ENCODE measurements at regions of chr16 and their contacts with region 1.

Region 1: GRCh38 chr16:69286941-69287713 is 24.0 kb upstream of the VPS4A start:
- DNase-seq: peak; percentile 55
- H3K4me3 ChIP-seq: no peak overlapping the region
- H3K27ac ChIP-seq: no peak overlapping the region
- H3K4me1 ChIP-seq: peaks cover 7% of the 10 kb centered on the region
- H3K27me3 ChIP-seq: no peaks in the 10 kb centered on the region
- CTCF ChIP-seq: peak; percentile 30 to 70 (median 45)
- POLR2A ChIP-seq: no peak

Region 2: DNA sequence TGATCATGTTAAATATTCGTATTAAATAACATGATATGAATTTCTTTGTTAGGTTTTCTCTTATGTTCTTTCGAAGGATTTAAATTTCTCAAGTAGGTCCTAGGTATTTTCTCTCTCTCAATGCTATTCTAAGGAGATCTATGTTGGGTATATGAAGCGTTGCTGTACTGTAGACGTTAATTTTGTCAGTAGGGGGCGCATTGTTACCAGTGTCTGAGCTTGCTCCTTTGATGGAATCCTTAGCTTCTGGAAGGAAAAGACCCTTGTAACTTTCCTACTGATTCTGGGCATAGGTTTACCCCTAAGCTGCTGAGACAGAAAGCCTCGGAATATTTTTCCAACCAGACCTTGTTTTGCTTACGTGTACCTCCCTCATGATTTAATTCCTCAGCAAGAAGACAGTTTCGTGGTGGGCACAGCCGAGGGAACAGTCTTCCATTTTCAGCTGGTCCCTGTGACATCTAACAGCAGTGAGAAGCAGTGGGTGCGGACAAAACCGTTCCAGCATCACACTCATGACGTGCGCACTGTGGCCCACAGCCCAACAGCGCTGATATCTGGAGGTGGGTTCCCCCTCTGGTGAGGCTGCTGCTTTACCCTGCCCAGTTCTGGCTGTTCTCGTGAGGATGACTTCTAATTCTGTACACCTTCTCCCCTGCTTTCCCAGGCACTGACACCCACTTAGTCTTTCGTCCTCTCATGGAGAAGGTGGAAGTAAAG is 136.8 kb before region 1 on chr16:
- intact Hi-C with region 1: loop called (anchors 5 kb)
- DNase-seq: peak; percentile 80
- H3K4me3 ChIP-seq: no peak overlapping the region
- H3K27ac ChIP-seq: no peak overlapping the region
- H3K4me1 ChIP-seq: peaks cover 10% of the 10 kb centered on the region
- H3K27me3 ChIP-seq: no peaks in the 10 kb centered on the region
- CTCF ChIP-seq: peak; percentile 32 to 73 (median 67)
- POLR2A ChIP-seq: no peak

Region 3: DNA sequence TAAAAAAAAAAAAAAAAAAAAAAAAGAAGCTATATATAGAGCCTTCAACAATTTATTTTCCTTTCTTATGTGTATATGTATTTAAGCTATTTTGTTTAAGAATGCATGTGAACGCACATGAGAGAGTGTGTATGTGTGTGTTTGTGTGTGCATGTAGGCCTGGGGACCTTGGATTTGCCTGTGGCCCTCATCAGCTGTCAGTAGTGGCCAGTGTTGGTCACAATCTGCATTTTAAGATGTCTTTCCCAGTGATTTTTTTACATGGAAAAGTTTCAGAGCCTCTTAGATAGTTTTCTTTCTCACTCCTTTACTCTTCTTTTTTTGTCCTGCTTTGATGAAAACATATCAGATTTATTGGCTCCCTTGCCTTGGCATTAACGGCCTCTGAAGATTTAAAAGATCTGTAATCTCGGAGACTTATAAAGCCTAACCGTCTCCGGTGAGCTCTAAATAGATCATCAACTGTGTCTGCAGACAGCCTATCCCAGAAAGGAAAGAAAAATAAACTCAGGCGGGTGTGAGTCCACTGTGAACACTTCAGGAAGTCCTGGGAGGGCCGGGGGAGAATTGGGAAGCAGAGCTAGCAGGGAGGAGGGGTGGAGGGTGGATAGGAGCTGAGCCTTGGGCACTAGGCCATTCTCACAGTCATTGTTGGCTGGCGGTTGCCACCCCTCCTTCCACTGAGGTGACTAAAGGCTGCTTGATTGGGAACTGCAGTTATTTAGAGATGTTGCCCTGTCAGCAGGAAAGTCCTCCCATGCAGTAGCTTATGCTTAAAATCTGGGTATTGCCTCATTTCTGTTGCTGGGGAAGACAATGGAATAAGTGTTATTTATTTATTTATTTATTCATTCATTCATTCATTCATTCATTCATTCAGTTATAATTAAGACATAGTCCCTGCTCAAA is 561.8 kb after region 1 on chr16:
- intact Hi-C with region 1: no loop called
- DNase-seq: peak; percentile 79
- H3K4me3 ChIP-seq: no peak overlapping the region
- H3K27ac ChIP-seq: peak overlapping the region; percentile 50 to 86
- H3K4me1 ChIP-seq: peaks cover 18% of the 10 kb centered on the region
- H3K27me3 ChIP-seq: no peaks in the 10 kb centered on the region
- CTCF ChIP-seq: no peak
- POLR2A ChIP-seq: no peak